Mammary epithelial cell (primary cell): ENCODE measurements at regions of chr18 and their contacts with region 1.

Region 1: DNA sequence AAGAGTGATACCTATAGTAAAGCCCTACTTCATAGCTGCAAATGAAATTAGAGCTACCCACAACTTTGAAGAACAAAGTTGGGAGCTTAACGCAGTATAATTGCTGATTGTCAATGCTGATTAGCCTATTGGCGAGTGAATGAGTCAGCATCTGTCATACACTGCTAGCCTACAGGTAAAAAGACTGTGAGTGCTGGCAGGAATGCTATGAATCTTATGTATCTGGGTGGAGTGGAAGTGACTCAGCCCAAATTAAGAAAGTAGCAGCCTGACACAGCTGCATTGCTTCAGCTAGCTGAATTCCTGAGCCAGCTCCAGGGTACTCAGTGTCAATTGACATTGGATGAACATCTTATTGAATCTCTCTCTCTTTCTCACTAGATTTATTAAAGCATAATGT is 179.3 kb upstream of the DCC start:
- DNase-seq: peak; percentile 94
- H3K4me3 ChIP-seq: no peak overlapping the region
- H3K27ac ChIP-seq: peak overlapping the region; percentile 82
- H3K4me1 ChIP-seq: peaks cover 21% of the 10 kb centered on the region
- H3K27me3 ChIP-seq: no peaks in the 10 kb centered on the region
- CTCF ChIP-seq: no peak

Region 2: GRCh38 chr18:52175406-52175805 is 14.8 kb after region 1 on chr18:
- CTCF ChIA-PET with region 1: no interaction called
- dilution Hi-C with region 1: no loop called
- in situ Hi-C with region 1: no loop called
- intact Hi-C with region 1: loop called (anchors 1 kb)
- DNase-seq: peak; percentile 77
- H3K4me3 ChIP-seq: no peak overlapping the region
- H3K27ac ChIP-seq: no peak overlapping the region
- H3K4me1 ChIP-seq: peaks cover 9% of the 10 kb centered on the region
- H3K27me3 ChIP-seq: no peaks in the 10 kb centered on the region
- CTCF ChIP-seq: no peak